ENCODE measurements at regions of chr15 and their contacts with region 1.

Region 1: GRCh38 chr15:55993111-55993803 is at the start of gene NEDD4:
- DNase-seq: peak; percentile 33 to 93
- H3K4me3 ChIP-seq: peak within 1 kb of the TSS; percentile 88 to 89
- H3K27ac ChIP-seq: peak within 1 kb of the TSS; percentile 88 to 95
- H3K4me1 ChIP-seq: peaks cover 0 to 8% of the 10 kb centered on the region in 2 donors
- H3K27me3 ChIP-seq: no peaks in the 10 kb centered on the region
- CTCF ChIP-seq: peak; percentile 21 to 57 (median 38)
- total RNA-seq, gene NEDD4: 6.1 TPM

Region 2: DNA sequence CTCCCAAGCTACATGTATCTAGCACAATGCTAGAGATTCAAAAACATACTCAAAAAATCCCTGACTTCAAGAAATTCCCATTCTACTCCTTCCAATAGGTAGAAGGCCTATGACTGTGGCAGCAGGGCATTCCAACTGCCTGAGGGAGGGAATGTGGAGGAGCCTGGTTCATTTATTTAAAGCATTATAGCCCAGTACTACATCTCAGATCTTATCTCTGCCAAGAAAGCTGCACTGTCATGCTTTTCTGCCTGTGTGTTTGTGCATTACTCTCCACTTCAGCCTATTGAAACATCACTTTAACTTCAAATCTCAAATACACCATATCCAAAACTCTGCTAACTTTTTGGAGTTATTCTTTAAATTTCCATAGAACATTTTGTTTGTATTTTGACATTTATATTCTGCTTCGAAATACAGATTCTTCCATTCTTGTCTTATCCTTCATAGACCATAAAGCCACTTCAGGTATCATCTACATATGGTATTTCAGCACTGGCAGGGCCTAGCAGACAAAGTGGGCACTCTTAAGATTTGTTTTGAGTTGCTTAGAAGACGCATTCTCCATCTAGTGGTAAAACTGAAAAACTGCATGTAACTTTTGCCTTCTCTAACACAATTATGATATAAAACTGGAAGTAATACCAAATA is 59.3 kb after region 1 on chr15:
- intact Hi-C with region 1: loop called (anchors 2 kb)
- DNase-seq: no peak
- H3K4me3 ChIP-seq: no peak overlapping the region
- H3K27ac ChIP-seq: no peak overlapping the region
- H3K4me1 ChIP-seq: no peaks in the 10 kb centered on the region
- H3K27me3 ChIP-seq: no peaks in the 10 kb centered on the region
- CTCF ChIP-seq: peak; percentile 59 to 78 (median 78)

Region 3: DNA sequence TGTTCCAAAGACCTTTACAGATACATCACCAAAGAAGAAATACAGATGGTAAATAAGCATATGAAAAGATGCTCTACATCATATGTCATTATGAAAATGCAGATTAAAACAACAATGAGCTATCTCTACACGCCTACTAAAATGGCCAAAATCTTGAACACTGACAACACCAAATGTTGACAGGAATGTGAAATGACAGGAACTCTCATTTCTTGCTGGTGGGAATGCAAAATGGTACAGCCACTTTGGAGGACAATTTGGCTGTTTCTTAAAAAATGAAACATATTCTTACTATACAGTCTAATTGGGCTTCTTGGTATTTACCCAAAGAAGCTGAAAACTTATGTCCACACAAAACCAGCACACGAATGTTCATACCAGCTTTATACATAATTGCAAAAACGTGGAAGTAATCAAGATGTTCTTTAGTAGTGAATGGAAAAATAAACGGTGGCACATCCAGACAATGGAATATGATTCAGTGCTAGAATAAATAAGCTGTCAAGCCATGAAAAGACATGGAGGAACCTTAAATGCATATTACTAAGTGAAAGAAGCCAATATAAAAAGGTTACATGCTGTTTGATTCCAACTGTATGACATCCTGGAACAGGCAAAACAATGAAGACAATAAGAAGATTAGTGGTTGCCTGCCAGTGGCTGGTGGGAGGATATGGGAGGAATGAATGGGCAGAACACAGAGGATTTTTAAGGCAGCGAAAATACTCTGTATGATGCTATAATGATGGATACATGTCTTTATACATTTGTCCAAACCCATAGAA is 81.4 kb after region 1 on chr15:
- intact Hi-C with region 1: no loop called
- DNase-seq: no peak
- H3K4me3 ChIP-seq: no peak overlapping the region
- H3K27ac ChIP-seq: no peak overlapping the region
- H3K4me1 ChIP-seq: no peaks in the 10 kb centered on the region
- H3K27me3 ChIP-seq: no peaks in the 10 kb centered on the region
- CTCF ChIP-seq: no peak

Region 4: GRCh38 chr15:56102441-56102840 is 109.2 kb after region 1 on chr15:
- intact Hi-C with region 1: loop called (anchors 10 kb)
- DNase-seq: no peak
- H3K4me3 ChIP-seq: no peak overlapping the region
- H3K27ac ChIP-seq: peak overlapping the region; percentile 58 to 67
- H3K4me1 ChIP-seq: peaks cover 0 to 9% of the 10 kb centered on the region in 2 donors
- H3K27me3 ChIP-seq: no peaks in the 10 kb centered on the region
- CTCF ChIP-seq: no peak

Measured in ascending aorta (tissue), 2 donors.